ENCODE measurements at regions of chr19 and their contacts with region 1.

Region 1: GRCh38 chr19:41397086-41398049 is at the starts of genes BCKDHA and EXOSC5:
- DNase-seq: peak; percentile 100
- total RNA-seq, gene BCKDHA: 36.9 TPM
- total RNA-seq, gene EXOSC5: 9.0 TPM

Region 2: GRCh38 chr19:41363753-41364523 is 33.4 kb before region 1 on chr19 and contains the start of gene B9D2:
- intact Hi-C with region 1: loop called (anchors 5 kb)
- DNase-seq: peak; percentile 98
- total RNA-seq, gene B9D2: 1.9 TPM